ENCODE measurements at regions of chr6 and their contacts with region 1.

Region 1: GRCh38 chr6:16206595-16207037 is 31.8 kb upstream of the GMPR start:
- DNase-seq: peak; percentile 68
- CTCF ChIP-seq: peak; percentile 88

Region 2: GRCh38 chr6:16190214-16190613 is 16.4 kb before region 1 on chr6:
- CTCF ChIA-PET with region 1: interaction called, 13 read pairs
- POLR2A ChIA-PET with region 1: no interaction called
- DNase-seq: no peak
- CTCF ChIP-seq: no peak

Region 3: DNA sequence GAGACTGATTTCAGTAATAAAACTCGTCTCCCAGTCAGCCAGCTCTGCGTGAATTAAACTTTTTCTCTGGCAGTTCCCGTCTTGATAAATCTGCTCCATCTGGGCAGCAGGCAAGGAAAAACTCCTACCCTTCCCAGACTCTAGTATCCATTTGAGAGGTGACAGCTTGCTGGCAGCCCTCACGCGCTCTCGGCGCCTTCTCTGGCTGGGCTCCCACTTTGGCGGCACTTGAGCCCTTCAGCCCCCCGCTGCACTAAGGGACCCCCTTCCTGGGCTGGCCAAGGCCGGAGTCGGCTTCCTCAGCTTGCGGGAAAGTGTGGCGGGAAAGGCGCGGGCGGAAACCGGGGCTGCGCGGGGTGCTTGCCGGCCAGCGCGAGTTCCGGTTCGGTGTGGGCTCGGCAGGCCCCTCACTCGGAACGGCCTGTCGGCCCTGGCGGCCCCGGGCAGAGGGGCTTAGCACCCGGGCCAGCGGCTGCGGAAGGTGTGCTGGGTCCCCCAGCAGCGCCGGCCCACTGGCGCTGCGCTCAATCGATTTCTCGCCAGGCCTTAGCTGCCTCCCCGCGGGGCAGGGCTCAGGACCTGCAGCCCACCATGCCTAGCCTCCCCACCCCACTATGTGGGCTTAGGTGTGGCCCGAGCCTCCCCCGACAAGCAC is 10.0 kb after region 1 on chr6:
- CTCF ChIA-PET with region 1: interaction called, 23 read pairs
- POLR2A ChIA-PET with region 1: no interaction called
- DNase-seq: no peak
- CTCF ChIP-seq: no peak

Region 4: DNA sequence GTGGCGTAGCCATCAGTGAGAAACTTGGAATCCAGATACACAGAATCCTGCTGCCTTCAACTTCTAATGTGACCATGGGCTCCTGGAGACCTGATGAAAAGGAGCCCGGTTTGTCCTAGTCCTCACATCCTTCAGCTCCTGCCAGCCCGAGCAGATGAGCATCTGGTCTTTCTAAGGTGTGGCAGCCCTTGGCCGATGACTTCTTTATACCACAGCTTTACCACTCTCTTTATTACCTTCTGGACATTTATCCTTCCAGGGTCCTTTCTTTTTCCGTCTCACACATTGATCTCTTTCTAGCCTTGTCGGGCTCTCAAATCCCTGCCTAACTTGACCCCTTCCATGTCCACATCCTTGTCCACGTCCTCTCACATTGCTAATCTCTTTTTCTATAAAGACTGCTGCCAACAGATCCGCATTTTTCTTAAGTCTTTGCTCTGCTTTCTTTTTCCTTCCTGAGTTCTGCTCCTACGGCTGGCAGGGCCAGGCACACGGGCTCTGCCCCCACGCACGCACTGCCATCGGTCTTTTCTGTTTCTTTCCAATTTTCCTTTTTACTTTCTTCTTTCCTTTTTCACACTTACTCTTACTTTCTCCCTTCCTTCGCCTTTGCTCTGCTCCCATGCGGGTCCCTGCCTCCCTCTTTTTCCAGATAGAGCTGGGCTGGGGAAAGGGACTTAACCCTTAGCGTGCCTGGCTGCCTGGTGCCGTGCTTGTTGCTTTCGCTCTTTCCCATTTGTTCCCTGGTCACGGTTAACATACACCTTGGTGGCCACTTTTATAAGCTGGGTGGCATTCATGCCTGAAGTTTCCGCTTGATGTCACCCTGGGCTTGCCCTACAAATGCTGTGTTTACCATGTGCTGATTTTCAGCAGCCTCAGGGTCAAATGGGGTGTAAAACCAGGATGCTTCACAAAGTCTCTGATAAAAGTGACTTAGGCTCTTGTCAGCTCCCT is 22.4 kb after region 1 on chr6:
- CTCF ChIA-PET with region 1: interaction called, 32 read pairs
- POLR2A ChIA-PET with region 1: no interaction called
- DNase-seq: no peak
- CTCF ChIP-seq: no peak

Region 5: DNA sequence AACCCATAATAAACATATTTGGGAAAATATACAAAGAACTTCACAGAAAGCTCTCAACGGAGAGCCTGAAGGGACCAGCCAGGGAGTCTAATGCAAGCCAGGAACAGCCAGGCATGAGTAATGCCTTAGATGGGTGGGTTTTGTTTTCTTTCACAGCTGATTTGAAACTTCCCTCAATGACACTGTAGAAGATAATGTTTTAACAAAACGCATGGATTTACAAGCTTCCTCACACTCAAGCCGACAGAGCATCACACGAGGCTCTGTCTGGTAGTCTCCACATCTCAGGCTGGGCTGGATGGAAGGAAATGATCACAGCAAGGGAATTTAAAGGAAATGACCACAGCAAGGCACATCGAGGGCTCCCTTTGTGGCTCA is 145.6 kb after region 1 on chr6:
- CTCF ChIA-PET with region 1: no interaction called
- POLR2A ChIA-PET with region 1: no interaction called
- DNase-seq: no peak
- CTCF ChIP-seq: no peak